SK-N-SH (cell line): ENCODE measurements at regions of chr12 and their contacts with region 1.

Region 1: GRCh38 chr12:18250313-18250916 is 10.9 kb upstream of the PIK3C2G start:
- DNase-seq: peak; percentile 26
- H3K4me3 ChIP-seq: peak overlapping the region in 1 of 2 experiments; percentile 39; a peak in 1 of 4 replicates
- H3K27ac ChIP-seq: peak overlapping the region in 1 of 2 experiments; percentile 53; a peak in 1 of 4 replicates
- H3K4me1 ChIP-seq: no peaks in the 10 kb centered on the region; a peak in 1 of 4 replicates
- H3K27me3 ChIP-seq: no peaks in the 10 kb centered on the region
- CTCF ChIP-seq: peak; percentile 84
- EP300 ChIP-seq: no peak
- RAD21 ChIP-seq: peak; percentile 81

Region 2: DNA sequence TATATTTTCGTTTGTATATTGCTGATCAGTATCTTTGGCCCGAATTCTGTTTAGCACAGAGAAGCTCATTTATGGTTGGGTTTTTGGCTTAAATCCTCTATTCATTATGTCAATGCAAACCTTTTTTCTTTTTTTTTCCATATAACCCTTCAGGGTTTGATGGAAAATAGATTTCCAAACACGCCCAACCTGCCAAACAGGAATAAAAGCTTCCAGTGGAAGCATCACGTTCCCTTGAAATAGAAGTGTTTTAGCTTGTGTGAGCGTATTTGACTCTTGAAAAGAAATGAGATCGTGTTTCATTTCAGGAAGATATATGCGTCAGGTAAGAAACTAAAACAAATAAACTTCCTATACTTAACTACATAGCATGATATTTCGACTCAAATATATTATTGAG is 10.8 kb after region 1 on chr12 and contains the start of gene PIK3C2G:
- CTCF ChIA-PET with region 1: interaction called, 20 read pairs
- POLR2A ChIA-PET with region 1: no interaction called
- DNase-seq: no peak
- H3K4me3 ChIP-seq: no peak within 1 kb of the TSS
- H3K27ac ChIP-seq: peak within 1 kb of the TSS in 1 of 2 experiments; percentile 87; a peak in 2 of 4 replicates
- H3K4me1 ChIP-seq: no peaks in the 10 kb centered on the region
- H3K27me3 ChIP-seq: no peaks in the 10 kb centered on the region; the same call in 1 of the 2 replicates
- CTCF ChIP-seq: no peak
- EP300 ChIP-seq: no peak
- RAD21 ChIP-seq: no peak
- polyA plus RNA-seq, gene PIK3C2G: 0.02 and 0.08 TPM in 2 replicates

Region 3: GRCh38 chr12:18320036-18320617 is 69.7 kb after region 1 on chr12:
- CTCF ChIA-PET with region 1: interaction called, 35 read pairs
- POLR2A ChIA-PET with region 1: no interaction called
- DNase-seq: peak; percentile 22
- H3K4me3 ChIP-seq: peak overlapping the region in 1 of 2 experiments; percentile 10; a peak in 1 of 4 replicates
- H3K27ac ChIP-seq: peak overlapping the region in 1 of 2 experiments; percentile 78; a peak in 1 of 4 replicates
- H3K4me1 ChIP-seq: no peaks in the 10 kb centered on the region; a peak in 1 of 4 replicates
- H3K27me3 ChIP-seq: no peaks in the 10 kb centered on the region
- CTCF ChIP-seq: peak; percentile 67
- EP300 ChIP-seq: no peak
- RAD21 ChIP-seq: peak; percentile 54